Panc1 (cell line): ENCODE measurements at regions of chr19 and their contacts with region 1.

Region 1: GRCh38 chr19:40231544-40232424 is 5.3 kb upstream of the CCNP start:
- DNase-seq: no peak
- ATAC-seq: peak; percentile 62
- H3K4me3 ChIP-seq: no peak overlapping the region
- H3K27ac ChIP-seq: peak overlapping the region; percentile 35
- H3K4me1 ChIP-seq: peaks cover 35% of the 10 kb centered on the region
- H3K27me3 ChIP-seq: peaks cover under 1% of the 10 kb centered on the region; the same call in 1 of the 2 replicates
- CTCF ChIP-seq: no peak

Region 2: DNA sequence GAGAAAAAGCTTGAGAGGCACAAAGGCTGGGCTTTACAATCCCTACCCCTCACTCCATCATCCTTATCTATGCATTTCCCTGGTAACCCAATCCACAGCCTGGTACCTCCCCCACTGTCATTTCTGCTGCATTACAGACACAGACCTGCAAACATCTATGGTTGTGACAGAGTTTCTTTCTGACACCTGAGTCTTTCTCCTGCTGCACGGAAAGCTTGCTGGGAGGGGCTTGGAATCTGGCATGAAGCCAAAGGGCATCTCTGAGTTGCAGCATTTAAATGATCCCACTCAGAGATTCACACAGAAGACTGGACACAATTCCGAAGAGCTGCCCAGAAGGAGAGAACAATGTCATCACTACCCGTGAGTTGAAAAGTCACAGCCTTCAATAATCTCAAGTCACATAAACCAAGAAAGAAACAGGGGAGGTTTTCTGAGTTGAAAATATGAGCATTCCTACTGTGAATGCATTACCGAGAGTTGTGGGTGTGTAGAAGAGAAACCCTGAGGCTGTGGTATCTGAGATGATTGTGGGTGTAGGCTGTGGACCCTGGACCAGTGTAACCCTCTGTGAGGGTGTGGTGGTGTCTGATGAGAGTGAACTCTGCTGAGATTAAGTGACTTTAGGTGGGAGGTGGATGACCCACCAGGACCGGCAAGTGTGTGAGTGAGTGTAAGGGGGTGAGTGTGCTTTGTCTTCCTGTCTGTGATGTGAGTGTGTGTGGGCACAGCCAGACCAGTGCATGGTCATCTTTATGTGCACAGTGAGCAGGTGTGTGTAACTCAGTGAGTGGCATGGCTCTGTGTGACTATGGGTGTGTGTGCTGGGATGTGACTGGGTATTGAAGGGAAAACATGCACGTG is 527.4 kb before region 1 on chr19 and contains the start of gene LGALS14:
- CTCF ChIA-PET with region 1: no interaction called
- POLR2A ChIA-PET with region 1: no interaction called
- in situ Hi-C with region 1: no loop called
- intact Hi-C with region 1: loop called (anchors 1 kb)
- DNase-seq: no peak
- ATAC-seq: peak; percentile 52
- H3K4me3 ChIP-seq: no peak within 1 kb of the TSS
- H3K27ac ChIP-seq: no peak within 1 kb of the TSS
- H3K4me1 ChIP-seq: no peaks in the 10 kb centered on the region
- H3K27me3 ChIP-seq: peaks cover 78% of the 10 kb centered on the region
- CTCF ChIP-seq: no peak
- total RNA-seq, gene LGALS14: not detected

Region 3: DNA sequence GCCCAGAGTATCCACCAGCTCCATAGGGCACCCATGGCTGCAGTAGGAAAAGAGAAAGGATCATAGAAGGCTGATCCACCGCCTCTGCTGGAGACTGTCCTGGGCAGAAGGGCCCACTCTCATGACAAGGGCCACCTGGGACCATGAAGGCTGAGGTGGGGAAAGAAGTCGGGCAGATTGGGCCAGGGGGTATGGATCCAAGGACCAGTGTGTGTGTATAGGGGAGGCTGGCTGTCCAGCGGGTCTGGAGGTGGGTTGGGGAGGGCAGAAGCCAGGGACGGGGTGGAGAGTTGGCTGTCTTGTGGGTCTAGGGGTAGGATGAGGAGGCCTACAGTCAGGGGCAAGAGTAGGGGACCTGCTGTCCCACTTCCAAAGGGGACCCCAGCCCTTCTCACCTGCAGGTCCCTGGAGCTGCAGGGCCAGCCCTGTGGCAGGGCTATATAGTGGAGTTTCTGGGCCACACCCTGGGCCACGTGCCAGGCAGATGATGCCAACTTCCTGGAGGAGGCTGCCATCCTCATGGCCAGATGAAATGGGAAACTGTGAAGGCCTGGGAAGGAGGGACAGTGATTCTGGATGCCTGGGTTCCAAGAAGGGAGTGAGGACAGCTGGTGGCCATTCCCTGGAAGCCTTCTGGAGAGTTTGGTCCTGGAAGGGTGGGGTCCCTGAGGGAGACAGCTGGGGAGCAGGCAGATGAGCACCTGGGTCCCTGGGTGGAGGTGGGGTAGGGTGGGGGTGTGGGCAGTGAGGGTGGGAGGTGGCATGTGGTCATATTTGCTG is 297.0 kb before region 1 on chr19 and contains the start of gene FCGBP:
- CTCF ChIA-PET with region 1: interaction called, 10 read pairs
- POLR2A ChIA-PET with region 1: no interaction called
- in situ Hi-C with region 1: no loop called
- intact Hi-C with region 1: no loop called
- DNase-seq: no peak
- ATAC-seq: peak; percentile 31
- H3K4me3 ChIP-seq: no peak within 1 kb of the TSS
- H3K27ac ChIP-seq: no peak within 1 kb of the TSS
- H3K4me1 ChIP-seq: no peaks in the 10 kb centered on the region
- H3K27me3 ChIP-seq: peaks cover 30% of the 10 kb centered on the region
- CTCF ChIP-seq: no peak
- total RNA-seq, gene FCGBP: 6.4 TPM

Region 4: DNA sequence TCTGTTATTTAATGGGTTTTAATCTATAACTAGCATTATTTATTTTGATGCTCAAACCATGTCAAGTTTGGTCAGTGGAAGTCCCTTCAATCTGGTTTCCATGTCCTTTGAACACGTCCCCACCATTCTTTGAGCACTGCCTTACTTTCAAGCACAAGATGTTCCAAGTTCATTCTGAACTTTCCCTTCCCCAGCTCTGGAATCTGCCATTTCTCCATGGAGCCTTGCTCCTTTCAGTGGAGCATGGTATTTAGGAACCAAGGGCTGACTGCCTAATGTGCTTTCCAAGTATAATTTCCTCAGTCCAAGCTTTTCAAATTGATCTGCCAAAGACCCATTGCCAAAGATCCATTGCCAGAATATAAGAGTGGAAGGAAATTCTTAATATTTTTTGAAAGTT is 236.0 kb before region 1 on chr19:
- CTCF ChIA-PET with region 1: no interaction called
- POLR2A ChIA-PET with region 1: no interaction called
- in situ Hi-C with region 1: no loop called
- intact Hi-C with region 1: no loop called
- DNase-seq: no peak
- ATAC-seq: no peak
- H3K4me3 ChIP-seq: peak overlapping the region; percentile 35 to 49
- H3K27ac ChIP-seq: peak overlapping the region; percentile 83
- H3K4me1 ChIP-seq: peaks cover 19% of the 10 kb centered on the region
- H3K27me3 ChIP-seq: no peaks in the 10 kb centered on the region
- CTCF ChIP-seq: no peak

Region 5: DNA sequence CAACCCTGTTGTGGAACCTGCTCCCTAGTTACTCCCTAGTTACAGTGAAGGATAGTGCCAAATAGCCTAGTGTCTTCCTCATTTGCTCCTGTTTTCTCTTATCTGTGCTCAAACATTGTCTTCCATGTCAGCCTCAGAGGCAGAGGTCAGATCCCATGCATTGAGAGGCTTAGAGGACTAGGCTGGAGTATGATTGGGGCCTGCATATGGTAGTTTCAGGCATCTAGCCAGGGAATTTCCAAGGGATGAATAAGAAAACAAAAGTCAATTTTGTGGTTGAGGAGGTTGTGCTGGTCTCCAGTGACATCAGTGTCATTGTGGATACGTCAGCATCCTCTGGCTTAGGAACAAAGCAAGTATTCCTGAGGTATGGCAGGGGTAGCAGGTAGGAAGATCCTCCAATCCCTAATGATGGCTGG is 225.5 kb before region 1 on chr19:
- CTCF ChIA-PET with region 1: no interaction called
- POLR2A ChIA-PET with region 1: interaction called, 13 read pairs
- in situ Hi-C with region 1: no loop called
- intact Hi-C with region 1: no loop called
- DNase-seq: peak; percentile 100
- ATAC-seq: peak; percentile 91
- H3K4me3 ChIP-seq: no peak overlapping the region
- H3K27ac ChIP-seq: no peak overlapping the region
- H3K4me1 ChIP-seq: peaks cover 8% of the 10 kb centered on the region; the same call in 1 of the 2 replicates
- H3K27me3 ChIP-seq: no peaks in the 10 kb centered on the region
- CTCF ChIP-seq: no peak

Region 6: GRCh38 chr19:40110570-40110969 is 121.2 kb before region 1 on chr19:
- CTCF ChIA-PET with region 1: no interaction called
- POLR2A ChIA-PET with region 1: no interaction called
- in situ Hi-C with region 1: no loop called
- intact Hi-C with region 1: no loop called
- DNase-seq: no peak
- ATAC-seq: peak; percentile 41
- H3K4me3 ChIP-seq: no peak overlapping the region
- H3K27ac ChIP-seq: no peak overlapping the region
- H3K4me1 ChIP-seq: no peaks in the 10 kb centered on the region
- H3K27me3 ChIP-seq: no peaks in the 10 kb centered on the region; the same call in 1 of the 2 replicates
- CTCF ChIP-seq: no peak

Region 7: DNA sequence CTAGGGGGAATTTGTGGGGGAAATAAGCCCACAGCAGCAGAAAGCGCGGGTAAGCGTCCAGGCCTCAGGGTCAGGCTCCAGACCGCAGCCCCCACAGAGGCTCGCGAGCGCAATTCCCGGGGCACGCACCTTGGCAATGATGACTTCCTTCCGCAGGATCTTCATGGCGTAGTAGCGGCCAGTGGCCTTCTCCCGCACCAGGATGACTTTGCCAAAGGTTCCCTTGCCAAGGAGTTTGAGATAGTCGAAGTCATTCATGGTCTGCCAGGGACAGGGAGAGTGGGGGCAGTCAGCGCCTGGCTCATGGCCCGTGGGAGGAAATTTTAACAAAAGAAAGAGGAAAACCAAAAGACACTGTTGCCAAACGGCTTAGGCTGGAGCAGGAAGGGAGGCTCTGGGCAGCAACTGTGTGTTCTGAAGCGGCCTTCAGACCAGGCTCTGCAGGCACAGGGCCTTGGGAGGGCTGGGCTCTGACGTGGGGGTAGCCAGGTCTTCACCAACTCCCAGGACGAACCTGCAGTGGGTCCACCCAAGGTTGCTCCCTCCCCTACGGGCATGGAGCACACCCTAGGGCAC is 10.1 kb after region 1 on chr19:
- CTCF ChIA-PET with region 1: interaction called, 11 read pairs
- POLR2A ChIA-PET with region 1: interaction called, 5 read pairs
- in situ Hi-C with region 1: no loop called
- intact Hi-C with region 1: no loop called
- DNase-seq: no peak
- ATAC-seq: peak; percentile 5; the same call in 1 of the 2 replicates
- H3K4me3 ChIP-seq: no peak overlapping the region
- H3K27ac ChIP-seq: no peak overlapping the region
- H3K4me1 ChIP-seq: no peaks in the 10 kb centered on the region
- H3K27me3 ChIP-seq: no peaks in the 10 kb centered on the region
- CTCF ChIP-seq: no peak

Region 8: GRCh38 chr19:40279120-40279551 is 47.4 kb after region 1 on chr19:
- CTCF ChIA-PET with region 1: interaction called, 4 read pairs
- POLR2A ChIA-PET with region 1: interaction called, 12 read pairs
- in situ Hi-C with region 1: no loop called
- intact Hi-C with region 1: no loop called
- DNase-seq: no peak
- ATAC-seq: no peak
- H3K4me3 ChIP-seq: no peak overlapping the region
- H3K27ac ChIP-seq: no peak overlapping the region
- H3K4me1 ChIP-seq: peaks cover 67% of the 10 kb centered on the region
- H3K27me3 ChIP-seq: no peaks in the 10 kb centered on the region
- CTCF ChIP-seq: no peak

Region 9: DNA sequence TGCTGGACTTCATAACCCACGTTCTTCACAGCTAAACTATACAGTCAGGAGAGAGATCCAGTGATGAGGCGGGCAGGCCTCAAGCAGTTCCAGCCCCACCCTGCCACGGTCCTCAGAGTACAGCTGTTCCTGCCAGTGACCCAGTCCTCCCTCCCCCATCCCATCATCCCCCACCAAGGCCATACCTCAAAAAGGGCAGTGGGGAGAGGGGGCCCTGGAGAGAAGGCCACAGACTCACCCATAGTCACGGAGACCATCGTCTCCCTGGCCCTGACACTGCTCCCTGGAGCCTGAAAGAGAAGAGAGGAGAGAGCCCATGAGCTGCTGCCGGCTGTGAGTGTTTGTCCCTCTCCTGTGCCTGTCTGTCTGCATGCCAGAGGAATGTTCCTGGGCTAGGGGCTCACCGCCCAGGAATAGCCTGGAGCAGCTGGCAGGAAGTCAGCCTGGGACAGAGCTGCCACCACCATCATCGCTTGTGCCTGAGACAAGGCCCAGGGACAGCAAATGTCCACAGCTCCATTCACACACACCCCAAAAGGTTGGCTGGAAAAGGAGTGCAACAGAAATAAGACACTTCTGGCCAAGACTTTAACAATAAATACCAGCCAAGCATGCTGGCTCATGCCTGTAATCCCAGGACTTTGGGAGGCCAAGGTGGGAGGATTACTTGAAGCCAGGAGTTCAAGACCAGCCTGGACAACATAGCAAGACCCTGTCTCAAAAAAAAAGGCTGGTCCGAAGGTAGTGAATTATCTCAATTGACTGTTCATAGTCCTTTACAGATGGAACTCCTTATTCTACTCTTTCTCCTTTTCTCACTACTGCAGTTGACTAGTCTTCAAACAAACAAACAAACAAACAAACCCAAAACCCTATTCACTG is 110.1 kb after region 1 on chr19:
- CTCF ChIA-PET with region 1: interaction called, 3 read pairs
- POLR2A ChIA-PET with region 1: interaction called, 13 read pairs
- in situ Hi-C with region 1: no loop called
- intact Hi-C with region 1: no loop called
- DNase-seq: no peak
- ATAC-seq: peak; percentile 67
- H3K4me3 ChIP-seq: no peak overlapping the region
- H3K27ac ChIP-seq: no peak overlapping the region
- H3K4me1 ChIP-seq: no peaks in the 10 kb centered on the region
- H3K27me3 ChIP-seq: peaks cover 2% of the 10 kb centered on the region; the same call in 1 of the 2 replicates
- CTCF ChIP-seq: no peak

Region 10: DNA sequence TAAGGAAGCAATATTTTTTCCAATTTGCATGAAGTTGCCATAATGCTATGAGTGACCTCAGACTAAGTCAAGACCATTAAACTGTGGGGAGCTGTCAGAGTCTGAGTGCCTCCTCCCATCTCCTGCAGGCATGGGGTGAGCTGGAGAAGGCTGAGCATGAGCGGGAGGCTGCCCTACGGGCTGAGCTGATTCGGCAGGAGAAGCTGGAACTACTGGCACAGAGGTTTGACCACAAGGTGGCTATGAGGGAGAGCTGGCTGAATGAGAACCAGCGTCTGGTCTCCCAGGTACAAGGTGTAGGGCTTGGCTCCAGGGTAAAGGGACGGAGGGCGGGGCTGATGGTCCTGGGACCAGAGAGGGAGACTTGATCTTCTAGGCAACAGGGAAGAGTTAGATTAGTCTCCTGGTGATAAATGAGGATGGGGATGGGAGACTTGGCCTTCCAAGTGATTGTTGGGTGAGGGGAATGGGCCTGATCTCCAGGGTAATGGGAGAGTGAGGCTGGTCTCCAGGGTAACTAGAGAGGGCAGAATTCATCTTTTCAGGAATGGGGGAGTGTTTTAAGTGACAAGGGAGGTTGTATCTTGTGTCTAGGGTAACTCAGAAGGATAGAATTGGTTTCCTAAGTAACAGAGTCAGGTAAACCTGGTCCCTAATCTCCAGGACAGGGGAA is 271.0 kb after region 1 on chr19:
- CTCF ChIA-PET with region 1: no interaction called
- POLR2A ChIA-PET with region 1: no interaction called
- in situ Hi-C with region 1: no loop called
- intact Hi-C with region 1: no loop called
- DNase-seq: no peak
- ATAC-seq: 0 out of 2 replicates have a peak, but pooled peaks have one; percentile 74
- H3K4me3 ChIP-seq: no peak overlapping the region
- H3K27ac ChIP-seq: no peak overlapping the region
- H3K4me1 ChIP-seq: no peaks in the 10 kb centered on the region
- H3K27me3 ChIP-seq: no peaks in the 10 kb centered on the region
- CTCF ChIP-seq: no peak; the same call in 1 of the 2 replicates